CD4-positive, alpha-beta T cell (primary cell): ENCODE measurements at regions of chr17 and their contacts with region 1.

Region 1: DNA sequence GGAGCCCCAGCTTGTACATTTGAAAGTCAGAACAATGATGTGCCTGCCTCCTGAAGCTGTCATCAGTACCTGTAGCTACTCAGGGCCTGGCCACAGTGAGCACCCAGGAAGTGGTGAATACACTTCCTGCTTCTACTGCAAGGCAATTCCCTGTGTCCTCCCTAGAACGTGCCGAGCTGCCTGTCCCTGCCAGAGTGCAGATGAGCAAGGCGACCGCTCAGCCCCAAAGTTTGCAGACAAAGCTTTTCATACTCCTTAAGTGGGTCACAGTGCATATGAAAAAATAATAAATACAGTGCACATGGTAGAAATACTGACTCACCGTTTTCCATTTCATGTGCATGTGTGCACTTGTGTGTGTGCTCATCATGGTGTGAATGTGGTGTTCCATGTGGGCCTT is 77.3 kb downstream of the MPRIP start:
- DNase-seq: peak; percentile 29 to 88 (median 54)
- ATAC-seq: peak; percentile 94
- H3K4me3 ChIP-seq: no peak overlapping the region
- H3K4me3 Mint-ChIP-seq: peak overlapping the region; percentile 64
- H3K27ac ChIP-seq: peak overlapping the region; percentile 51 to 90
- H3K27ac Mint-ChIP-seq: peak overlapping the region; percentile 92
- H3K4me1 ChIP-seq: peaks cover 89% of the 10 kb centered on the region
- H3K4me1 Mint-ChIP-seq: peaks cover 88% of the 10 kb centered on the region
- H3K27me3 ChIP-seq: no peaks in the 10 kb centered on the region
- H3K27me3 Mint-ChIP-seq: no peaks in the 10 kb centered on the region
- CTCF ChIP-seq: no peak

Region 2: DNA sequence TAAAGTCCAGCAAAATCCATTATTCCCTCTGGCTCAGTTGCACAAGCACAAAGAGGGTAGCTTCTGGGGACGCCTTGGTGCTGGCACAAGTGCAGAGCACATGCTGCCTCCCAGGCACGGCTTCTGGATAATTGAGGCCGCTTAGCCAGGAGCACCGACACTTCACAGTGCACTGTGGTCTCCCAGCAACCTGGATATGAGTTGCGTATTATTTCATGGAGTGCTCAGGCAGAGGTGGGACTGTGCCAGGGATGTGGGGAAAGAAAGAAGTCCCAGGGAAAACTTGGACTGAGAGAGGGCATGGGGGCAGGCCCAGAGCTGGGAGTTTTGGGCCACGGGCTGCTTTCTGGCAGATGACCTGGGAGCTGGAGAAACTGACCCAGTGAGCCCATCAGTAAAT is 39.8 kb before region 1 on chr17:
- CTCF ChIA-PET with region 1: no interaction called
- POLR2A ChIA-PET with region 1: no interaction called
- intact Hi-C with region 1: loop called in 1 of 2 experiments (anchors 5 kb)
- DNase-seq: no peak
- ATAC-seq: no peak
- H3K4me3 ChIP-seq: no peak overlapping the region
- H3K4me3 Mint-ChIP-seq: no peak overlapping the region
- H3K27ac ChIP-seq: no peak overlapping the region
- H3K27ac Mint-ChIP-seq: no peak overlapping the region
- H3K4me1 ChIP-seq: peaks cover 3% of the 10 kb centered on the region
- H3K4me1 Mint-ChIP-seq: peaks cover 22% of the 10 kb centered on the region
- H3K27me3 ChIP-seq: no peaks in the 10 kb centered on the region
- H3K27me3 Mint-ChIP-seq: no peaks in the 10 kb centered on the region
- CTCF ChIP-seq: no peak